Activated B cell treated with CpG ODN at 0.5 μM for 24 hours (primary cell): ENCODE measurements at regions of chr10 and their contacts with region 1.

Region 1: DNA sequence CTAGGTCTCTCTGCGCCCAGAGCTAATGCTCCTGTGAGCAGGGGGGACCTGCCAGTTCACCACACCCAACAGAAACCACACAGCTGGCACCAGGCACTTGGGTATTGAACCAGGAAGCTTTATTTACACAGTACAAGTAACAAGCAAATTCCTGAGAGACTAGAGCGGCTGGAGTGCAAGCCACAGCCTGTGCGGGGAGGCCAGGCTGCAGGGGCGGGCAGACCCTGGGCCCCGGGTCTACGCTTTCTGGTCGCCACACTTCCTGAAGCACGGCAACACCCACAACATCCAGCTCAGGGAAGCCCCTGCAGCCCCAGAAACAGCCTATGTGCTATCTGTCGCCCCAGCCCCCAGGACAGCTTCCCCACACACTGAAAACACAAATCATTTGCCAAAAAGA is 125.0 kb downstream of the FAM53B start:
- DNase-seq: no peak
- ATAC-seq: peak; percentile 72
- H3K4me3 Mint-ChIP-seq: peak overlapping the region; percentile 69
- H3K27ac Mint-ChIP-seq: peak overlapping the region; percentile 96
- H3K4me1 Mint-ChIP-seq: peaks cover 99% of the 10 kb centered on the region
- H3K27me3 Mint-ChIP-seq: no peaks in the 10 kb centered on the region
- CTCF ChIP-seq: no peak

Region 2: GRCh38 chr10:124461438-124462347 is 157.5 kb before region 1 on chr10 and contains the start of gene LHPP:
- CTCF ChIA-PET with region 1: no interaction called
- POLR2A ChIA-PET with region 1: no interaction called
- intact Hi-C with region 1: no loop called
- DNase-seq: peak; percentile 91
- ATAC-seq: peak; percentile 92
- H3K4me3 Mint-ChIP-seq: peak within 1 kb of the TSS; percentile 92
- H3K27ac Mint-ChIP-seq: peak within 1 kb of the TSS; percentile 95
- H3K4me1 Mint-ChIP-seq: peaks cover 32% of the 10 kb centered on the region
- H3K27me3 Mint-ChIP-seq: peaks cover 4% of the 10 kb centered on the region
- CTCF ChIP-seq: no peak
- total RNA-seq, gene LHPP: 21.0 and 22.9 TPM in 2 replicates

Region 3: GRCh38 chr10:124632064-124632531 is 12.9 kb after region 1 on chr10:
- CTCF ChIA-PET with region 1: interaction called, 3 read pairs
- POLR2A ChIA-PET with region 1: interaction called, 23 read pairs
- intact Hi-C with region 1: loop called (anchors 1 kb)
- DNase-seq: no peak
- ATAC-seq: no peak
- H3K4me3 Mint-ChIP-seq: no peak overlapping the region
- H3K27ac Mint-ChIP-seq: peak overlapping the region; percentile 95
- H3K4me1 Mint-ChIP-seq: peaks cover 95% of the 10 kb centered on the region
- H3K27me3 Mint-ChIP-seq: no peaks in the 10 kb centered on the region
- CTCF ChIP-seq: no peak

Region 4: DNA sequence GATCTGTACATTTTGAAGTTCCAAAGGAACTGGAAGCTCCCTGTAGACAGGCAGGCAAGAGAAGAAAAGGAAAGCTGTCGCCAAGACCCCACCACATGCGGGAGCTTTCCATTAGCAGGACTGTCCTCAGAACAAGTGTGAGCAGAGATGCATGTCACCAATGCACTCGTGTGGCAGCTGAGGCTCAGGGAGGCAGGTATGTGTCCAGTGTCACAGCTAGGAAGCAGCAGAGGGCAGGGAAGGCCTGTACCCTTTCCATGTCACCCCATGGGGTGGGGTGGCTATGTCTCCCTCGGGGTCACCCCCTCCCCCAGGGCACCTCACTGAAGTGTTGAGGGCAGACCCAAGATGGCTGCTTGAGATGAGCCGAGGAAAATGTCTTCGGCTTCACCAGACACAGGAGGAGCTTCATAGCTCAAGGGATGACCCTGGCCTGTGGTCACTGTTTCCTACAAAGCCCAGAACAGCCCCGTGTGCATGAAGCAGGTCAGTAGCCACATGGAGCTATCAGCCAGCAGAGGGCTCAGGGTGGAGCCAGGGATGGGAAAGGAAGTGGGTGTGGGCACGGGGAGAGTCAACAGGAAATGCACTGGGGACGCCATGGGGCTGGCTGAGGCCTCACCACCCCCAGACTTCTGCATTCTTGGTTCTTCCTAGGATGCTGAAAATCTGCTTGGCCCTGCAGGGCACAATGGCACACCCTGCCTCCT is 28.4 kb after region 1 on chr10:
- CTCF ChIA-PET with region 1: interaction called, 3 read pairs
- POLR2A ChIA-PET with region 1: interaction called, 26 read pairs
- intact Hi-C with region 1: no loop called
- DNase-seq: no peak
- ATAC-seq: peak; percentile 64
- H3K4me3 Mint-ChIP-seq: peak overlapping the region; percentile 62
- H3K27ac Mint-ChIP-seq: peak overlapping the region; percentile 88
- H3K4me1 Mint-ChIP-seq: peaks cover 100% of the 10 kb centered on the region
- H3K27me3 Mint-ChIP-seq: no peaks in the 10 kb centered on the region
- CTCF ChIP-seq: no peak